ENCODE measurements at regions of chr18 and their contacts with region 1.

Region 1: DNA sequence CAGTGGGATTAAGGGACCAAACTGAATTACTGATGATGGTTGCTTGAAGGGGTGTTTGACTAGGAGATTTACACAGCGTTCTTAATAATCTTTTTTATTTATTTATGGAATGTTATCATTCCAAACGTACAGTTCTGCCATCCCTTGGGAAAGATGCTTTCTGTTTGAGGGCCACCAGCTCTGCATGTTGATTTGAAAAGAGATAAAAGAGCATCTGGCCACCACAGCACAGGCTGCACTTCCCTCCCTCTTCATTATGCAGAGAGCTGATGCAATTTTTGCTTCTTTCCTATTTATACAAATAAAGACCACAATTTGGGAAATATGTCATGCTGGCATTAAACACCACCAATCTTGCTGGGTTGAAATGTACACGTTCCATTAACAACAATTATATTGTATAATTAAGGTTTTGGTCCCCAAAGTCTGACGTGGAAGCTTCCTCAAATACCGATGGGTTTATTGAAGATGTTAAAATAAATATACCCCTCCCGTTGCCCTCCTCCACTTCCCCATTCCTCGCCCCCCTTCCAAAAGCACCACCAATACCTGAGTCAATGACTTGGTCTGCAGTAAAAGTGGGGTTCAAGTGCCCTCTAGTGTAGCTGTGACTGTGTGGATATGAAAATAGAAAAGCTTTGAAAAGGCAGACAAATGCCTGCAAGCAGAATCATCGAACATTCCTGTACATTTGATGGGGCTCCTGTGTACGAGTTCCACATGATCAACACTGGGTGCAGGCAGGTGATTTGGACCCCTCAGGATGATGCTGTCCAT is 211.9 kb downstream of the HRH4 start:
- DNase-seq: no peak
- ATAC-seq: no peak

Region 2: GRCh38 chr18:24600076-24600654 is 72.2 kb before region 1 on chr18:
- intact Hi-C with region 1: loop called (anchors 5 to 10 kb)
- DNase-seq: no peak
- ATAC-seq: no peak

Region 3: GRCh38 chr18:24915547-24915946 is 243.2 kb after region 1 on chr18:
- intact Hi-C with region 1: no loop called
- DNase-seq: no peak
- ATAC-seq: no peak

Measured in left cardiac atrium (tissue), 4 donors.